ENCODE measurements at regions of chr3 and their contacts with region 1.

Region 1: DNA sequence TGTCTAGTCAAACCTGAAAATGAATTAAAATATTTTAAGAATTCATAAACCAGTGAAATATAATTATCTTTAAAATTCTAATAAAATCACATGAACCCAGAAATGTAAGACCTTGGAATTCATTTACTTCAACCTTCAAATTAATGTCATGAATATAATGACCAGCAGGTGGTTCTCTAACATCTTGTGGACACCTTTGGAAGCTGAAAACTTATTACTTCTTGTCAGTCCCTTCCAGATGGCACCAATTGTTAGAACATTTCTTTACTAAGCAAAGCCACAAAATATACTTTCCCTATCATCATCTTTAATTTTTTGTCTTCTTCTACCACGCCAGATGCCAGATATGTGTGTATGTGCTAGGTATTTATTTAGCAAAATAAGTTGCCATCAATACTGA is 240.0 kb downstream of the MBNL1 start:
- DNase-seq: no peak
- ATAC-seq: no peak
- H3K4me3 ChIP-seq: no peak overlapping the region
- H3K27ac ChIP-seq: no peak overlapping the region
- H3K4me1 ChIP-seq: peaks cover 0 to 7% (median 0%) of the 10 kb centered on the region in 12 donors
- H3K27me3 ChIP-seq: no peaks in the 10 kb centered on the region
- CTCF ChIP-seq: peak in 11 of 12 donors; percentile 33 to 63 (median 54)
- POLR2A ChIP-seq: no peak

Region 2: GRCh38 chr3:151146071-151146730 is 1362.5 kb before region 1 on chr3:
- intact Hi-C with region 1: no loop called
- DNase-seq: peak; percentile 68 to 73 (median 70)
- ATAC-seq: peak; percentile 93 to 98 (median 94)
- H3K4me3 ChIP-seq: peak overlapping the region in 2 of 12 donors; percentile 8 to 17
- H3K27ac ChIP-seq: no peak overlapping the region
- H3K4me1 ChIP-seq: peaks cover 0 to 12% (median 6%) of the 10 kb centered on the region in 12 donors
- H3K27me3 ChIP-seq: peaks cover 0 to 7% (median 0%) of the 10 kb centered on the region in 9 donors
- CTCF ChIP-seq: peak; percentile 80 to 94 (median 88)
- POLR2A ChIP-seq: no peak

Region 3: GRCh38 chr3:152398495-152398894 is 110.2 kb before region 1 on chr3:
- intact Hi-C with region 1: no loop called
- DNase-seq: no peak
- ATAC-seq: no peak
- H3K4me3 ChIP-seq: no peak overlapping the region
- H3K27ac ChIP-seq: peak overlapping the region in 11 of 12 donors; percentile 32 to 94 (median 68)
- H3K4me1 ChIP-seq: peaks cover 20 to 95% (median 84%) of the 10 kb centered on the region in 12 donors
- H3K27me3 ChIP-seq: no peaks in the 10 kb centered on the region
- CTCF ChIP-seq: no peak
- POLR2A ChIP-seq: no peak

Region 4: DNA sequence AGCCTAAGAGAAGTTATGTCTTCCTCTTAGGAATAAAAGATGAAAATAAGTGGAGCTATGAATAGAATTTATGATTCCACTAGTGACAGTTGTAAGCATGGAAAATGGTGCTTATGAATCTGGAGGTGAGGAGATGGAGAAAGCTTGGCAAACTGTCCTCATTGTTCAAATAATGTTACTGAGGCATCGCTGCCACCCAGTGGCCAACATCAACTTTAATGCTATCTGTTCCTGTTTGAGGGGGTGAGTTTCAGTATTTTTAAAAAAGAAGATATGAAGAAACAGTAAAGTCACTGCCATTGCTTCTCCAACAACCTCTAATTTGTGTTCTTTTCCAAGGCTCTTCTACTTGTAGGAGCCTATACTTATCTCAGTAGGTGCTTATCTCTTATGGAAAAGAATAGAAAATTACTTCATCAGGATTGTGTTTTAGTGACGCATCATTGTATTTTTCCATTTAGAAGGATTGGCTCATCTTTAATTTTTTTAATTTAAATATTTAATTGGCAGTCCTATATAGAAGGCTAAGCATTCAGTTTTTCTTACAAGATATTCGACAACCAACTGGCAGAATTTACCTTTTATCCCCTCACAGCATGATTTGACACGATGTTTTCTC is 65.9 kb after region 1 on chr3:
- intact Hi-C with region 1: loop called (anchors 1 to 10 kb)
- DNase-seq: peak; percentile 49 to 78 (median 56)
- ATAC-seq: peak; percentile 78 to 90 (median 86)
- H3K4me3 ChIP-seq: no peak overlapping the region
- H3K27ac ChIP-seq: peak overlapping the region in 1 of 12 donors; percentile 16
- H3K4me1 ChIP-seq: peaks cover 0 to 11% (median 1%) of the 10 kb centered on the region in 12 donors
- H3K27me3 ChIP-seq: no peaks in the 10 kb centered on the region
- CTCF ChIP-seq: peak; percentile 36 to 71 (median 65)
- POLR2A ChIP-seq: no peak

Region 5: GRCh38 chr3:152817400-152817799 is 308.7 kb after region 1 on chr3:
- intact Hi-C with region 1: loop called in 1 of 10 experiments (anchors 5 kb)
- DNase-seq: no peak
- ATAC-seq: no peak
- H3K4me3 ChIP-seq: no peak overlapping the region
- H3K27ac ChIP-seq: no peak overlapping the region
- H3K4me1 ChIP-seq: no peaks in the 10 kb centered on the region
- H3K27me3 ChIP-seq: no peaks in the 10 kb centered on the region
- CTCF ChIP-seq: no peak
- POLR2A ChIP-seq: no peak

Region 6: DNA sequence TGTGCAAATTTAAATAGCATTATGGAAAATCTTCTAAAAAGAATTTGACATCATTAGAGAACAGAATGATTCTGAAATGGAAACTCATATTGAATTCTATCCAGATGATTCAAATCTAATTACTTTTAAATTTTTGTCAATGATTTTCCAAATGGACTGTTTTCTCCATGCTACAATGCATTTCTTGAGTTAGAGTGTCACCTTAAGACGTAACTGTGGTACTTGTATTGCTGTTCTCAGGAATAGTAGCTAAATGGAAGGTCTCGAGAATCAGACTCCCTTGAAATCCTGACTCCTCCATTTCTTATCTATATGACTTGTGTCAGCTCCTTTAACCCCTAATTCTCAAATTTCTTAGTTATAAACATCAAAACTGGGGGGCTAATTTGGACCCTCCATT is 428.5 kb after region 1 on chr3:
- intact Hi-C with region 1: loop called in 1 of 10 experiments (anchors 10 kb)
- DNase-seq: no peak
- ATAC-seq: no peak
- H3K4me3 ChIP-seq: no peak overlapping the region
- H3K27ac ChIP-seq: no peak overlapping the region
- H3K4me1 ChIP-seq: no peaks in the 10 kb centered on the region
- H3K27me3 ChIP-seq: no peaks in the 10 kb centered on the region
- CTCF ChIP-seq: peak in 8 of 12 donors; percentile 13 to 55 (median 29)
- POLR2A ChIP-seq: no peak

Region 7: DNA sequence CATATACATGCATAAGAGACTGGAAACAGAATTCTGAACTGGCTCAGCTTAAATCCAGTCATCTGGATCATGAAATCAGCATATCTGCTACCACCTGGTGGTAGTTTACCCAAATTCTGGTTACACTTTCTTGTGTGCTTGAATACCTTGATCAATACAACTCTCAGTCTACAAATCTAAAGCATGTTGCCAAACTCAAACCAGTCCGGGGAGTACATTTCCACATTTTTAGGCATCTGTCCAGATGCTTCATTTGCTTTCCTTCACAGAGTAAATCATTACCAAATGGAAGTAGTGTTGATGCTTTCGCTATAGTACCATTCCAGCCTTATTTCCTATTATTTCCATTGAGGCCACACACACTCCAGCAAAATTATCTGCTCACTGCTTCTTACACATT is 452.6 kb after region 1 on chr3:
- intact Hi-C with region 1: loop called in 1 of 10 experiments (anchors 5 kb)
- DNase-seq: no peak
- ATAC-seq: no peak
- H3K4me3 ChIP-seq: no peak overlapping the region
- H3K27ac ChIP-seq: no peak overlapping the region
- H3K4me1 ChIP-seq: peaks cover 0 to 9% (median 0%) of the 10 kb centered on the region in 12 donors
- H3K27me3 ChIP-seq: no peaks in the 10 kb centered on the region
- CTCF ChIP-seq: peak in 10 of 12 donors; percentile 23 to 48 (median 34)
- POLR2A ChIP-seq: no peak